Naive thymus-derived CD4-positive, alpha-beta T cell (primary cell): ENCODE measurements at regions of chr11 and their contacts with region 1.

Region 1: DNA sequence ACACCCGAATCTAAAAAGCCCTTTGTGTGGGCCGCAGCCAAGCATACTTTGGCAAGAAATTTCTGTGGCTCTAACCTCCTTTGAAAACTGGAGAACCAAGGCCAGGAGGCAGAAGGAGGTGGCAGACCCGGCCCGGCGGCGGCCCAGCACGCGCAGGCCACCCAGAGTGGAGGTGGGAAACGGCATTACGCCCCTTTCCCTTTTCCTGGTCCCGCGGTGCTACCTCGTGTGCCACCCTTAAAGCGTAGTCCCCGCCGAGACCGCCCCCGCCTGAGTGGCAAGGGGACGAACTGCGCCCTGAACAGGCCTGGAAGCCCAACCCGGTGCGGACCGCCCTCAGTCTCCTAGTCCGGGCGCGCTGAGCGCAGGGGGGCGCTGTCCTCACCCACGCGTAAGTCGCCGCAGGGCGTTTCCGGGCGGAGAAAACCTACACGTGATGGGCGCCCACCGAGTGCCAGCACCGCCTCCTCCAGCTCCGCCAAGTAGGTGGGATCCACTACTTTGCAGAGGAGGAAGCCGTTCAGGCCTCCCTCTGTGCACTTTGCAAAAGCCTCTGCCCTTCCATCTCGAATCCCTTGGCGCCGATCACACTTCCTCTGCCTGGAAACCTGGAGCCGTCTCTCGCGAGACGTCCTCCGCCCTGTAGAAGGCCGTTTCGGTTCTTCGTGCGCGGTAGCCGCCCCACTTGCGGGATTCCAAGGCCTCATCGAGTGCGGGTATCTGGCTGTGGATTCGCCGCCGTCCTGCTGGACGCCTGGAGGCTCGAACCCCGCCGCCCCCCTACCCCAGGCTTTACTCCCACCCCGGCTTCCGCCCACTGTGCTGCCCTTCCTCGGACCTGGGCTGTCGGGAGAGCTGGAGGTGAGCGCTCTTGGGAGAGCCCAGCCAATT is at the start of gene ACCS:
- DNase-seq: peak; percentile 80 to 91 (median 88)
- ATAC-seq: peak; percentile 98
- H3K4me3 ChIP-seq: peak within 1 kb of the TSS; percentile 88
- H3K4me3 Mint-ChIP-seq: peak within 1 kb of the TSS; percentile 79 to 97 (median 94)
- H3K27ac ChIP-seq: peak within 1 kb of the TSS; percentile 87
- H3K27ac Mint-ChIP-seq: peak within 1 kb of the TSS; percentile 84 to 97 (median 94)
- H3K4me1 ChIP-seq: peaks cover 6 to 12% of the 10 kb centered on the region in 2 donors
- H3K4me1 Mint-ChIP-seq: peaks cover 12 to 53% (median 26%) of the 10 kb centered on the region in 7 donors
- H3K27me3 ChIP-seq: no peaks in the 10 kb centered on the region
- H3K27me3 Mint-ChIP-seq: no peaks in the 10 kb centered on the region
- total RNA-seq, gene ACCS: 25.1 to 79.2 (median 57.6) TPM

Region 2: DNA sequence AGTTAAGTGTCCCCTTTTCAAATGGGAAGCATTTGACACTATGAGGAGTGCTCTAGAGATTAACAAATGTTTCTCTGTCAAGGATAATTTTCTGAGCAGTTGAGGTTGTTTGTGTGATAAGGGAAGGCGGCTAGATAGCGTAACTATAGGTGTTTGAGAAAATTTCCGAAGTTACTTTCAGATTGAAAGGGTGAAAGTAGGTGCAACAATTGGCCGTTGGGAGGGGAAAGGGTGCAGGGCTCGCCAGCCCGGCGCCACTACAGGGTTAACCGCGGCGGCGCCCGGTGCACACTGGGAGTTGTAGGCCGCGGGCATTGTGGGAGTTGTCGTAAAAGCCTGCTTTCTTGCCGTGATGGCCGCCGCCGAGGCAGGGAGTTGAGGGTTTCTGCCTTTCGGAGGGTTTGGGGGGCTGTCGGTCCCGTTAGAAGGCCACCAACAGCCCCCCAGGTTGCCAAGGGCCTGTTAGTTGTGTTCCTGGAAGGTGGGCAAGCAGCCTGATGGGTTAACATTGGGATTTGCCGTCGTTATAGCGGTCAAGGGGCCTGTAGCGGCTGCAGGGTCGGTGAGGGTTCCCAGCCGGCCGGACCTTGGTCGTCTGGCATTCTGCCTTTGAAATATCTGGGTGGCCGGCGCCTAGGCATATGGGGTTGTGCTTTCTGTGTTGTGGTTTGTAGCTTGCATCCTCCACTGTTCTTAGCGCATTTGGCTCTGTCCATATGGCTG is 422.0 kb before region 1 on chr11:
- CTCF ChIA-PET with region 1: no interaction called
- POLR2A ChIA-PET with region 1: no interaction called
- intact Hi-C with region 1: loop called in 1 of 2 experiments (anchors 2 kb)
- DNase-seq: peak; percentile 70 to 89 (median 86)
- ATAC-seq: peak; percentile 100
- H3K4me3 ChIP-seq: peak overlapping the region; percentile 95
- H3K4me3 Mint-ChIP-seq: peak overlapping the region; percentile 87 to 98 (median 94)
- H3K27ac ChIP-seq: peak overlapping the region; percentile 85
- H3K27ac Mint-ChIP-seq: peak overlapping the region; percentile 51 to 95 (median 90)
- H3K4me1 ChIP-seq: peaks cover 7 to 10% of the 10 kb centered on the region in 2 donors
- H3K4me1 Mint-ChIP-seq: peaks cover 7 to 31% (median 23%) of the 10 kb centered on the region in 7 donors
- H3K27me3 ChIP-seq: no peaks in the 10 kb centered on the region
- H3K27me3 Mint-ChIP-seq: peaks cover 12 to 18% (median 17%) of the 10 kb centered on the region in 5 donors

Region 3: DNA sequence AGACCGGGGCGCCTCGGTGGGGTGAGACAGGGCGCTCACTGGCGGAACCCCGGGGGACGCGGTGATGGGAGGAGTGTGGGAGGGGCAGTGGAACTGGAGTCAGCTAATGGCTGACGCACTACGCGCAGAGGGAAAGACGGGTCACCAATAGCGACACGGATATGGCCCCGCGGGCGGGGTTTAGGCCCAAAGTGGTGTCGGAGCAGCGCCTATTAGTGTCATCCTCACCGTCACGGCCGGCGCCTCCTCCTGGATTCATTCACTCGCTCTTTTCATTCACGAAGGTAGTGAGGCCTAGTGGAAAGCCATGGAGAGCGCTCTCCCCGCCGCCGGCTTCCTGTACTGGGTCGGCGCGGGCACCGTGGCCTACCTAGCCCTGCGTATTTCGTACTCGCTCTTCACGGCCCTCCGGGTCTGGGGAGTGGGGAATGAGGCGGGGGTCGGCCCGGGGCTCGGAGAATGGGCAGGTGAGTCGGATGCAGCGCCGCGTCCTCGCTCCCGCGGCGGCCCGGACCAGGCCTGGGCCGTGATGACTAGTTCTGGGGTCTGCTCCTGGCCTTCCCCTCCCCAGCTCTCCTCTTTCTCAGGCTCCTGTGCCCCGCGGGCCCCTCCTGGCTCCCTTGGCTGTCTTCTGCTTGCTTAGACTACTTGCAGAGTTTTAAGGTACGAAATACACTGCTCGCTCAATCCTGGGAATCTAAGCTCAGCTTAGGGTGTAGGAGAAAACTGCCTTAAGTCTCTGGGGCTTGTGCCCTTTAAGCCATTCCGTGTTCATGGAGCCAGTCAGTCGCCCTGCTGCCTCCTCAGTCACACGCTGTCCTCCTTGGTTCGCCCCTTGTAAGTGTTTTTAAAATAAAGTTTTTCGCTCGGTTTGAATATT is 385.3 kb before region 1 on chr11 and contains the start of gene HSD17B12:
- CTCF ChIA-PET with region 1: no interaction called
- POLR2A ChIA-PET with region 1: no interaction called
- intact Hi-C with region 1: loop called (anchors 1 to 2 kb)
- DNase-seq: peak; percentile 91 to 100 (median 99)
- ATAC-seq: peak; percentile 99
- H3K4me3 ChIP-seq: peak within 1 kb of the TSS; percentile 81
- H3K4me3 Mint-ChIP-seq: peak within 1 kb of the TSS; percentile 85 to 99 (median 96)
- H3K27ac ChIP-seq: peak within 1 kb of the TSS; percentile 89
- H3K27ac Mint-ChIP-seq: peak within 1 kb of the TSS; percentile 84 to 98 (median 97)
- H3K4me1 ChIP-seq: peaks cover 4 to 8% of the 10 kb centered on the region in 2 donors
- H3K4me1 Mint-ChIP-seq: peaks cover 11 to 59% (median 43%) of the 10 kb centered on the region in 7 donors
- H3K27me3 ChIP-seq: no peaks in the 10 kb centered on the region
- H3K27me3 Mint-ChIP-seq: peaks cover 0 to 14% (median 2%) of the 10 kb centered on the region in 5 donors
- total RNA-seq, gene HSD17B12: 21.1 to 39.5 (median 24.7) TPM

Region 4: GRCh38 chr11:43880640-43881159 is 185.4 kb before region 1 on chr11 and contains the start of gene ALKBH3:
- CTCF ChIA-PET with region 1: no interaction called
- POLR2A ChIA-PET with region 1: interaction called, 11 read pairs
- intact Hi-C with region 1: loop called in 1 of 2 experiments (anchors 1 kb)
- DNase-seq: peak; percentile 78 to 92 (median 90)
- ATAC-seq: peak; percentile 100
- H3K4me3 ChIP-seq: peak within 1 kb of the TSS; percentile 90
- H3K4me3 Mint-ChIP-seq: peak within 1 kb of the TSS; percentile 87 to 96 (median 90)
- H3K27ac ChIP-seq: peak within 1 kb of the TSS; percentile 80
- H3K27ac Mint-ChIP-seq: peak within 1 kb of the TSS; percentile 82 to 97 (median 88)
- H3K4me1 ChIP-seq: peaks cover 16 to 19% of the 10 kb centered on the region in 2 donors
- H3K4me1 Mint-ChIP-seq: peaks cover 12 to 47% (median 36%) of the 10 kb centered on the region in 7 donors
- H3K27me3 ChIP-seq: no peaks in the 10 kb centered on the region
- H3K27me3 Mint-ChIP-seq: peaks cover 0 to 22% (median 13%) of the 10 kb centered on the region in 5 donors
- total RNA-seq, gene ALKBH3: 28.9 to 32.8 (median 30.2) TPM

Region 5: GRCh38 chr11:43895601-43896000 is 170.5 kb before region 1 on chr11:
- CTCF ChIA-PET with region 1: no interaction called
- POLR2A ChIA-PET with region 1: no interaction called
- intact Hi-C with region 1: loop called in 1 of 2 experiments (anchors 10 kb)
- DNase-seq: no peak
- ATAC-seq: no peak
- H3K4me3 ChIP-seq: no peak overlapping the region
- H3K4me3 Mint-ChIP-seq: no peak overlapping the region
- H3K27ac ChIP-seq: no peak overlapping the region
- H3K27ac Mint-ChIP-seq: no peak overlapping the region
- H3K4me1 ChIP-seq: no peaks in the 10 kb centered on the region
- H3K4me1 Mint-ChIP-seq: peaks cover 0 to 15% (median 9%) of the 10 kb centered on the region in 7 donors
- H3K27me3 ChIP-seq: no peaks in the 10 kb centered on the region
- H3K27me3 Mint-ChIP-seq: no peaks in the 10 kb centered on the region

Region 6: GRCh38 chr11:43944761-43945311 is 121.2 kb before region 1 on chr11:
- CTCF ChIA-PET with region 1: no interaction called
- POLR2A ChIA-PET with region 1: no interaction called
- intact Hi-C with region 1: no loop called
- DNase-seq: peak in 5 of 9 donors; percentile 17 to 86 (median 35)
- ATAC-seq: peak; percentile 60
- H3K4me3 ChIP-seq: no peak overlapping the region
- H3K4me3 Mint-ChIP-seq: peak overlapping the region; percentile 48 to 95 (median 70)
- H3K27ac ChIP-seq: no peak overlapping the region
- H3K27ac Mint-ChIP-seq: peak overlapping the region in 2 of 9 donors; percentile 13 to 62
- H3K4me1 ChIP-seq: peaks cover 0 to 5% of the 10 kb centered on the region in 2 donors
- H3K4me1 Mint-ChIP-seq: peaks cover 12 to 20% (median 16%) of the 10 kb centered on the region in 7 donors
- H3K27me3 ChIP-seq: peaks cover 0 to 8% of the 10 kb centered on the region in 2 donors
- H3K27me3 Mint-ChIP-seq: peaks cover 55 to 78% (median 65%) of the 10 kb centered on the region in 5 donors

Region 7: DNA sequence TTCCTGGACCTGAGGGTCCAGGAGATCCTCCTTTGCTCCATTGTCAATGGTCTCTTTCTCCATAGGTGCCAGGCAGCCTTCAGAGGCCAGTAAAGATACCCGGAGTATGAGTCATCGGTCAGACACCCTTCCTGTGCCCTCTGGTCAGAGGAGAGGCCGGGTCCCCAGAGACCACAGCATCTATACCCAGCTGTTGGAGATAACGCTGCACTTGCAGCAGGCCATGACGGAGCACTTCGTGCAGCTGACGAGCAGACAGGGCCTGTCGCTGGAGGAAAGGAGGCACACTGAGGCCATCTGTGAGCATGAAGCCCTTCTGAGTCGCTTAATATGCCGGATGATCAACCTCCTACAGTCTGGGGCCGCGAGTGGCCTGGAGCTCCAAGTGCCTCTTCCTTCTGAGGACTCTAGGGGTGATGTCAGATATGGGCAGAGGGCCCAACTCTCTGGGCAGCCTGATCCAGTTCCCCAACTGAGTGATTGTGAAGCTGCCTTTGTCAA is 18.1 kb before region 1 on chr11 and contains the start of gene ACCSL:
- CTCF ChIA-PET with region 1: no interaction called
- POLR2A ChIA-PET with region 1: no interaction called
- intact Hi-C with region 1: no loop called
- DNase-seq: no peak
- ATAC-seq: no peak
- H3K4me3 ChIP-seq: no peak within 1 kb of the TSS
- H3K4me3 Mint-ChIP-seq: no peak within 1 kb of the TSS
- H3K27ac ChIP-seq: no peak within 1 kb of the TSS
- H3K27ac Mint-ChIP-seq: no peak within 1 kb of the TSS
- H3K4me1 ChIP-seq: no peaks in the 10 kb centered on the region
- H3K4me1 Mint-ChIP-seq: no peaks in the 10 kb centered on the region
- H3K27me3 ChIP-seq: peaks cover 0 to 3% of the 10 kb centered on the region in 2 donors
- H3K27me3 Mint-ChIP-seq: peaks cover 0 to 13% (median 0%) of the 10 kb centered on the region in 5 donors
- total RNA-seq, gene ACCSL: not detected

Region 8: DNA sequence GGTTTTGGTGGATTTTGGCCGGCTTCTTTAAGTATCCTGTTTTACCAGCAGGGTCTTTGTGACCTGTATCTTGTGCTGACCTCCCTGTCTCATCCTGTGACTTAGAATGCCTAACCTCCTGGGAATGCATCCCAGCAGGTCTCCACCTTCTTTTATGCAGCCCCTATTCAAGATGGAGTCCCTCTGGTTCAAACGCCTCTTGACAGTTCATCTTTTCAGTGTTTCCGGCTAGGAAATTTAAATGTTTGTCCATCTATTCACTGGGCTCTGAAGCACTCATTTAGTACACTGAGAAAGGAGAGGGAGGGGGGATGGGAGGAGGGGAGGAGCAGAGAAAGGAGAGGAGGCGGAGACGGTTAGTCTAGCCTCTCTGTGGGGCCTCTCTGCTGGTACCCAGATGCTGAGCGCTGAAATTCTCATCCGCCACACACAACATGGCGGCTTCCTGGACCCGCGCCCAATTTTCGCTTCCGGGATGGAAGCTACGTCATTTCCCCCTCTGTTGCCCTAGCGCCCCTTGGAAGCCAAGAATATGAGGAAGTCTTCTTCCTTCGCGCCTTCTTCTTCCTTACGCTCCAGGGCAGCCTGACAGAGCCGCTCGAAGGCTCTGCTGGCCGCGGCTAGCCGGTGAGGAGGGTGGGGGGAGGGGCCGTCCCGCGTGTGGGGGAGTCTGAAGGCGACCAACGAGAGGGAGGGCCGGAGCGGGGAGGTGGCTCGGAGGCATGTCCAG is 1289.1 kb after region 1 on chr11:
- CTCF ChIA-PET with region 1: no interaction called
- POLR2A ChIA-PET with region 1: no interaction called
- intact Hi-C with region 1: loop called in 1 of 2 experiments (anchors 5 kb)
- DNase-seq: peak; percentile 77 to 91 (median 88)
- ATAC-seq: peak; percentile 96
- H3K4me3 ChIP-seq: peak overlapping the region; percentile 93
- H3K4me3 Mint-ChIP-seq: peak overlapping the region; percentile 75 to 87 (median 82)
- H3K27ac ChIP-seq: peak overlapping the region; percentile 73
- H3K27ac Mint-ChIP-seq: peak overlapping the region; percentile 70 to 91 (median 83)
- H3K4me1 ChIP-seq: peaks cover 0 to 5% of the 10 kb centered on the region in 2 donors
- H3K4me1 Mint-ChIP-seq: peaks cover 9 to 31% (median 26%) of the 10 kb centered on the region in 7 donors
- H3K27me3 ChIP-seq: no peaks in the 10 kb centered on the region
- H3K27me3 Mint-ChIP-seq: peaks cover 0 to 28% (median 7%) of the 10 kb centered on the region in 5 donors

Region 9: GRCh38 chr11:45804761-45805304 is 1738.7 kb after region 1 on chr11 and contains the start of gene SLC35C1:
- CTCF ChIA-PET with region 1: no interaction called
- POLR2A ChIA-PET with region 1: no interaction called
- intact Hi-C with region 1: loop called in 1 of 2 experiments (anchors 2 kb)
- DNase-seq: peak; percentile 89 to 97 (median 93)
- ATAC-seq: peak; percentile 99
- H3K4me3 ChIP-seq: peak within 1 kb of the TSS; percentile 95
- H3K4me3 Mint-ChIP-seq: peak within 1 kb of the TSS; percentile 86 to 99 (median 92)
- H3K27ac ChIP-seq: peak within 1 kb of the TSS; percentile 87
- H3K27ac Mint-ChIP-seq: peak within 1 kb of the TSS; percentile 61 to 94 (median 91)
- H3K4me1 ChIP-seq: peaks cover 27 to 29% of the 10 kb centered on the region in 2 donors
- H3K4me1 Mint-ChIP-seq: peaks cover 31 to 43% (median 40%) of the 10 kb centered on the region in 7 donors
- H3K27me3 ChIP-seq: no peaks in the 10 kb centered on the region
- H3K27me3 Mint-ChIP-seq: no peaks in the 10 kb centered on the region
- total RNA-seq, gene SLC35C1: 7.9 to 22.8 (median 14.2) TPM